Prostate gland (tissue), 2 donors: ENCODE measurements at regions of chr14 and their contacts with region 1.

Region 1: DNA sequence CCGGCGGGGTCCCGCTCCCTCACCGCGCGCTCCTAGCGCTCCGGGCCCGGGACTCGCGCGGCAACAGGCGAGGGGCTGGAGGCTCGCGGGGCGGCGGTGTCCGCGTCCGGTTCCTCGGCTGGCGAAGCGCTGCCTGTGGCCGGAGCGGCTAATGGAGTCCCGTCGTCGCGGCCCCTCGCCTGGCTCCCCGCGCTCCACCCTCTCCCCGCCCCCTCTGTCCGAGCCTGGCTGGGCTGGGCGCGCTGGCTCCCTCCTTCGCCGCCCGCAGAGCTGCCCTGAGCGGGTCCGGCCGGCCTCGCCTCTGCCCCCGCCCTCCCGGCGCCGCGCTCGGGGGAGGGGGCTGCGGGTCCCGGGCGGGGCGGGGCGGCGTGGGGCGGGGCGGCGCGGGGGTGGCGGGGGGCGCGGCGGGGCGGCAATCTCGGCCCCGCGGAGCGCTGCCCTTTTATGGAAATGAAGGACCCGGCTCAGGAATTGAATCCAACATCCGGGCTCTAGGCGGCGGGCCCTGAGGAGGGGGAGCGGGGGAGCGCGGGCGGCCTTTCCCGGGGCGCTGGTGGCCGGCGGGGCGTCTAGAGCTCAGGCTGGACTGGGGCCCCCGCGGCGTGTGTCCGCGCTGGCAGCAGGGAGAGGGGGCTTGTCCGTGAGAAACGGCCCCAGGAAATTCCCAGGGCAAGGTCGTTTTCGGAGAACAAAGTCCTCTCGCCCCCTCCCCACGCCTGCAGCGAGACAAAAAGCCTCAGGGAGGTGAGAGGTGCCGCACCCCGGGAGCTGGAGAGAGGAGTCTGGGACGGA is at the start of gene FERMT2:
- DNase-seq: peak; percentile 86
- H3K4me3 ChIP-seq: peak within 1 kb of the TSS; percentile 92 to 96
- H3K27ac ChIP-seq: peak within 1 kb of the TSS; percentile 97 to 98
- H3K4me1 ChIP-seq: peaks cover 12% of the 10 kb centered on the region
- H3K27me3 ChIP-seq: no peaks in the 10 kb centered on the region
- CTCF ChIP-seq: peak in 1 of 4 experiments; percentile 33
- POLR2A ChIP-seq: peak; percentile 56
- total RNA-seq, gene FERMT2: 38.8 to 62.9 TPM

Region 2: GRCh38 chr14:52279405-52279804 is 671.7 kb before region 1 on chr14:
- intact Hi-C with region 1: no loop called
- DNase-seq: no peak
- H3K4me3 ChIP-seq: no peak overlapping the region
- H3K27ac ChIP-seq: no peak overlapping the region
- H3K4me1 ChIP-seq: no peaks in the 10 kb centered on the region
- H3K27me3 ChIP-seq: no peaks in the 10 kb centered on the region
- CTCF ChIP-seq: no peak
- POLR2A ChIP-seq: no peak

Region 3: DNA sequence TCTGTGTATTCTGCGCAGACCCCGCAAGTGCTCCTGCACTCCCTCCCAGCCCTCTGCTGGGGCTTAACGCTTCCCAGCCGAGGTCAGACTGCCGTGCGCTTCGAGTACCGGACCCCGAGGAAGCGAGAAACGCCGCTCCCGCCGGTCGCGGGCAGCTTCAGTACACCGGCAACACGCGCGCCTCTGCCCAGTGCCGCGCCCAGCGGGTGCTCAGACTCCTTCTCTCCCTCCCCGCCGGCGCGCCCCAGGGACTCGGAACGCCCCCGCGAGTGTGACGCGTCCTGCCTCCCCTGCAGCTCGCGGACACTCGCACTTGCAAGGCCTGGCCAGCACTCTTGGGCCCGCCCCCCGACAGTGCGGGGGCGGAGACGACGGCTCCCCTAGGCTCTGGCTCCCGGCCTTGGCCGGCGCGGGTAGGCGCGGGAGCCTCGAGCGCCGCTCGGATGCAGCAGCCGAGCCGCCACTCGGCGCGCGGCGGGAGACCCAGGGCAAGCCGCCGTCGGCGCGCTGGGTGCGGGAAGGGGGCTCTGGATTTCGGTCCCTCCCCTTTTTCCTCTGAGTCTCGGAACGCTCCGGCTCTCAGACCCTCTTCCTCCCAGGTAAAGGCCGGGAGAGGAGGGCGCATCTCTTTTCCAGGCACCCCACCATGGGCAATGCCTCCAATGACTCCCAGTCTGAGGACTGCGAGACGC is 637.0 kb before region 1 on chr14 and contains the start of gene PTGER2:
- intact Hi-C with region 1: loop called (anchors 10 kb)
- DNase-seq: peak; percentile 60
- H3K4me3 ChIP-seq: peak within 1 kb of the TSS; percentile 47 to 50
- H3K27ac ChIP-seq: peak within 1 kb of the TSS; percentile 70
- H3K4me1 ChIP-seq: no peaks in the 10 kb centered on the region
- H3K27me3 ChIP-seq: no peaks in the 10 kb centered on the region
- CTCF ChIP-seq: no peak
- POLR2A ChIP-seq: peak; percentile 46
- total RNA-seq, gene PTGER2: 5.4 to 8.9 TPM

Region 4: DNA sequence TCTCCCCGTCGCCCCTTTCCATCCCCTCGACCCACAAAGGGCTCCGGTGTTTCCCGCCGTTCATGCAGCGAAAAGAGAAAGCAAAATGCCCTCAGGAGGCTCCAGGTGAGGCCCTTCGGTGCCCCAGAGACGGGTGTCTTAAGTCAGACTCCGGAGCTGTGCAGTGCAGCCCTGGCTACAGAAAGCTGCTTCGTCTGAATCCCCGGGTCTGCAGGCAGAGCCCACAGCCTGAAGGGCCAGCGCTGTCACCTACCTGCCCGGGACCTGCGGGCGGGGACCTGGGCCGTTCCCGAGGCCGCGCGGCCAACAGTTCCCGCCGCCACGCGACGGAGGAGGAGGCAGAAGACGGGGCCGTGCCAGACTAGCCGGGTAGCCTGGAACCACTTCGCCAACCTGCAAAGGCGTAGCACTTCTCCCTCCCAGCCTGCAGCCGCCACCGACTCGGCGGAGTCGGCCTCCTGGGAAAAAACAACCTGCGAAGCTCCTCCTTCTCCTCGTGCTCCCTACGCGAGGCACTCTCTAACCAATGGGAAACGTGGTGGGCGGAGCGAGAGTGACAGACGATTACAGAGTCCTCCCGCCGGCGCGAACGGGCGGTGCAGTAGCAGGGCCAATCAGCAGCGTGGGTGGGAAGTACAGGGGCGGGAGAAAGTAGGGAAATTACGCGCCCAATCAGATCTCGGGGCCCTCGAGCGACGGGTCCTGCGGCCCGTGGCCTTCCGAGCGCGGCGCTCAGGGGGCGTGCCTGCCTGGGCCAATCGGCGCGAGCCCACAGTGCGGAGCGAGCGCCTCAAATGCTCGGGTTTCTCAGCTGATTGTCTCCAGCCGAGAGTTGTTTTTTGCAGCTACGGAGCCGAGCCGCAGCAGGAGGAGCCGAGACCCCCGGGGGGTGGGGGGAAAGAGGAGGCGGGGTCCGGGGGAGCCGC is 398.8 kb before region 1 on chr14 and contains the starts of genes GPR137C and TXNDC16:
- intact Hi-C with region 1: loop called (anchors 5 kb)
- DNase-seq: peak; percentile 100
- H3K4me3 ChIP-seq: peak within 1 kb of the TSS; percentile 61 to 80
- H3K27ac ChIP-seq: peak within 1 kb of the TSS; percentile 95 to 96
- H3K4me1 ChIP-seq: no peaks in the 10 kb centered on the region
- H3K27me3 ChIP-seq: no peaks in the 10 kb centered on the region
- CTCF ChIP-seq: peak in 1 of 4 experiments; percentile 46
- POLR2A ChIP-seq: peak; percentile 99
- total RNA-seq, gene GPR137C: 0.09 to 5.3 TPM
- total RNA-seq, gene TXNDC16: 14.0 to 37.1 TPM

Region 5: DNA sequence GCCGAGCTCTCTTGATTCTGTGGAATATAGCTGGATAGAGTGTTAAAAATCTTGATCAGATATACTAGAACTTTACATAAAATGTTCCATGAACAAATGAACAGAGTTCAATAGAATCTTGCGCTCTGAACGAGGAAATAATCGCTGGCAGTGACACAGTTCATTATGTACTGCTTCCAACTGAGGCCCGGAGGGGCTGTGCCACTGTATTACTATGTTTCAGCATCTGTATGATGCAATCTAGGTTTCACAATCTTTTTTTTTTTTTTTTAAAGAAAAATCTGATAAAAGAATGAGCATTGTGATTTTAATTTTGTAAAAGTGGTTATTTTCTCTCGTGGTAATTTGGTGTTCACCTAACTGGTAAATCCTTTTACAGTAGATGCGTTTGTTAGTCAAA is 77.4 kb before region 1 on chr14:
- intact Hi-C with region 1: loop called (anchors 10 kb)
- DNase-seq: no peak
- H3K4me3 ChIP-seq: no peak overlapping the region
- H3K27ac ChIP-seq: no peak overlapping the region
- H3K4me1 ChIP-seq: no peaks in the 10 kb centered on the region
- H3K27me3 ChIP-seq: no peaks in the 10 kb centered on the region
- CTCF ChIP-seq: no peak
- POLR2A ChIP-seq: no peak

Region 6: GRCh38 chr14:53055003-53055402 is 103.9 kb after region 1 on chr14:
- intact Hi-C with region 1: loop called (anchors 2 kb)
- DNase-seq: no peak
- H3K4me3 ChIP-seq: no peak overlapping the region
- H3K27ac ChIP-seq: no peak overlapping the region
- H3K4me1 ChIP-seq: no peaks in the 10 kb centered on the region
- H3K27me3 ChIP-seq: no peaks in the 10 kb centered on the region
- CTCF ChIP-seq: peak; percentile 27 to 70 (median 63)
- POLR2A ChIP-seq: no peak

Region 7: GRCh38 chr14:53306267-53306721 is 355.2 kb after region 1 on chr14:
- intact Hi-C with region 1: loop called (anchors 10 kb)
- DNase-seq: peak; percentile 19
- H3K4me3 ChIP-seq: peak overlapping the region; percentile 9 to 21
- H3K27ac ChIP-seq: peak overlapping the region in 1 of 2 donors; percentile 32
- H3K4me1 ChIP-seq: no peaks in the 10 kb centered on the region
- H3K27me3 ChIP-seq: no peaks in the 10 kb centered on the region
- CTCF ChIP-seq: peak; percentile 35 to 85 (median 69)
- POLR2A ChIP-seq: no peak